ENCODE measurements at regions of chr1 and their contacts with region 1.

Region 1: GRCh38 chr1:182143154-182143657 is 81.7 kb upstream of the ZNF648 start:
- DNase-seq: peak; percentile 91
- ATAC-seq: peak; percentile 58
- H3K4me3 Mint-ChIP-seq: no peak overlapping the region
- H3K27ac Mint-ChIP-seq: no peak overlapping the region
- H3K4me1 Mint-ChIP-seq: peaks cover 8% of the 10 kb centered on the region
- H3K27me3 Mint-ChIP-seq: peaks cover 6% of the 10 kb centered on the region
- CTCF ChIP-seq: peak; percentile 89

Region 2: DNA sequence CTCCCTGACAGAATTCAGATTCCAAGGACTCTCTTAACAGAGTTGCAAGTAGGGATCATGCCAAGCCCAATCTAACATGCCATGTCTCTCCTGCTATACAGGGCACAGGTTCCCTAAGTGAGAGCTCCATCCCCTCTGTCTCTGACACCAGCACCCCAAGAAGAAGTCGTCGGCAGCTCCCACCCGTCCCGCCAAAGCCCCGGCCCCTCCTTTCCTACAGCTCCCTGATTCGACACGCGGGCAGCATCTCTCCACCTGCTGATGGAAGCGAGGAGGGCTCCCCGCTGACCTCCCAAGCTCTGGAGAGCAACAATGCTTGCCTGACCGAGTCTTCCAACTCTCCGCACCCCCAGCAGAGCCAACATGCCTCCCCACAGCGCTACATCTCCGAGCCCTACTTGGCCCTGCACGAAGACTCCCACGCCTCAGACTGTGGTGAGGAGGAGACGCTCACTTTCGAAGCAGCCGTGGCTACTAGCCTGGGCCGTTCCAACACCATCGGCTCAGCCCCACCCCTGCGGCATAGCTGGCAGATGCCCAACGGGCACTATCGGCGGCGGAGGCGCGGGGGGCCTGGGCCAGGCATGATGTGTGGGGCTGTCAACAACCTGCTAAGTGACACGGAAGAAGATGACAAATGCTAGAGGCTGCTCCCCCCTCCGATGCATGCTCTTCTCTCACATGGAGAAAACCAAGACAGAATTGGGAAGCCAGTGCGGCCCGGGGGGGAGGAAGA is 344.8 kb before region 1 on chr1:
- CTCF ChIA-PET with region 1: no interaction called
- POLR2A ChIA-PET with region 1: no interaction called
- intact Hi-C with region 1: no loop called
- DNase-seq: no peak
- ATAC-seq: no peak
- H3K4me3 Mint-ChIP-seq: no peak overlapping the region
- H3K27ac Mint-ChIP-seq: no peak overlapping the region
- H3K4me1 Mint-ChIP-seq: no peaks in the 10 kb centered on the region
- H3K27me3 Mint-ChIP-seq: no peaks in the 10 kb centered on the region
- CTCF ChIP-seq: no peak

Region 3: DNA sequence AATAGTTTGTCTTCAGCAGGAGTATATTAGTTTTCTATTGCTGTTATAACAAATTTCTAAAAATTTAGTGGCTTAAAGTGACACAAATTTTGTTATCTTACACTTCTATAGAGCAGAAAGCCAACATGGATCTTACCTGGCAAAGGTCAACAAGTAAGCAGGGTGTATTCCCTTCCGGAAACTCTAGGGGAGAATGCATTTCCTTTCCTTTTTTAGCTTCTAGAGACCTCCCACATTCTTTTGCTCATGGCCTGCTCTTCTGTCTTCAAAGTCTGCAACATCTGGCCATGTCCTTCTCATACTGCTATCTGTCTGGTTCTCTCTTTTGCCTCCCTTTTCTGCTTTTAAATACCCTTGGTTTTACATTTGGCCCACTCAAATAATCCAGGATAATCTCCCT is 324.3 kb before region 1 on chr1:
- CTCF ChIA-PET with region 1: no interaction called
- POLR2A ChIA-PET with region 1: no interaction called
- intact Hi-C with region 1: no loop called
- DNase-seq: no peak
- ATAC-seq: no peak
- H3K4me3 Mint-ChIP-seq: no peak overlapping the region
- H3K27ac Mint-ChIP-seq: no peak overlapping the region
- H3K4me1 Mint-ChIP-seq: no peaks in the 10 kb centered on the region
- H3K27me3 Mint-ChIP-seq: peaks cover 22% of the 10 kb centered on the region
- CTCF ChIP-seq: no peak

Region 4: GRCh38 chr1:182129398-182129797 is 13.8 kb before region 1 on chr1:
- CTCF ChIA-PET with region 1: interaction called, 35 read pairs
- POLR2A ChIA-PET with region 1: no interaction called
- intact Hi-C with region 1: no loop called
- DNase-seq: no peak
- ATAC-seq: no peak
- H3K4me3 Mint-ChIP-seq: no peak overlapping the region
- H3K27ac Mint-ChIP-seq: no peak overlapping the region
- H3K4me1 Mint-ChIP-seq: no peaks in the 10 kb centered on the region
- H3K27me3 Mint-ChIP-seq: no peaks in the 10 kb centered on the region
- CTCF ChIP-seq: no peak

Region 5: DNA sequence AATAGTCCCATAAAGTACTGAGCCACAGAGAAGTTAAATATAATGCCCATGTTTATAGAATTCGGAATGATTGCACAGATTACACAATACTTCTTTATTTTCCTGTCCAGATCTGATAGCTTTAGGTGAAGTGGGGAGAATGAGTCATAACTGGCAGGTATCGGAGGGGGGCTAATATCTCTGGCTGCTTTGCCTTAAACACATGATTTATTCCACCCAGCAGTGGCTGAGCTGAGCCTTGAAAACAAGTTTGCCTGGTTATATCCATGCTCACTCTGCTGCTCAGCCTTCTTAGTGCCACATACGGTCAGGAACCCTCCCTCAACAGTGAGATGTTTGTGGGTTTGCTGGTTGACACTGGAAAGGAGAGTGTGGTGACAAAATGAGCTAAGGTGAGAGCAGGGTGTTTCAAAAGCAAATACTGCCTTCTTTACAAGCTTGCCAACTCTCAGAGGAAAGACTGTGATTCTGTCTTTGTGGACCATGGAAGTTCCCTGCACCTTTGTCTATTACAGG is 38.0 kb after region 1 on chr1:
- CTCF ChIA-PET with region 1: interaction called, 15 read pairs
- POLR2A ChIA-PET with region 1: no interaction called
- intact Hi-C with region 1: no loop called
- DNase-seq: no peak
- ATAC-seq: no peak
- H3K4me3 Mint-ChIP-seq: no peak overlapping the region
- H3K27ac Mint-ChIP-seq: no peak overlapping the region
- H3K4me1 Mint-ChIP-seq: no peaks in the 10 kb centered on the region
- H3K27me3 Mint-ChIP-seq: peaks cover 8% of the 10 kb centered on the region
- CTCF ChIP-seq: no peak

Region 6: GRCh38 chr1:182215764-182216163 is 72.6 kb after region 1 on chr1:
- CTCF ChIA-PET with region 1: interaction called, 11 read pairs
- POLR2A ChIA-PET with region 1: no interaction called
- intact Hi-C with region 1: no loop called
- DNase-seq: no peak
- ATAC-seq: no peak
- H3K4me3 Mint-ChIP-seq: no peak overlapping the region
- H3K27ac Mint-ChIP-seq: no peak overlapping the region
- H3K4me1 Mint-ChIP-seq: no peaks in the 10 kb centered on the region
- H3K27me3 Mint-ChIP-seq: peaks cover 2% of the 10 kb centered on the region
- CTCF ChIP-seq: no peak

Region 7: GRCh38 chr1:182374101-182374834 is 231.1 kb after region 1 on chr1:
- CTCF ChIA-PET with region 1: interaction called, 17 read pairs
- POLR2A ChIA-PET with region 1: no interaction called
- intact Hi-C with region 1: no loop called
- DNase-seq: no peak
- ATAC-seq: no peak
- H3K4me3 Mint-ChIP-seq: no peak overlapping the region
- H3K27ac Mint-ChIP-seq: no peak overlapping the region
- H3K4me1 Mint-ChIP-seq: no peaks in the 10 kb centered on the region
- H3K27me3 Mint-ChIP-seq: peaks cover 3% of the 10 kb centered on the region
- CTCF ChIP-seq: no peak

Region 8: DNA sequence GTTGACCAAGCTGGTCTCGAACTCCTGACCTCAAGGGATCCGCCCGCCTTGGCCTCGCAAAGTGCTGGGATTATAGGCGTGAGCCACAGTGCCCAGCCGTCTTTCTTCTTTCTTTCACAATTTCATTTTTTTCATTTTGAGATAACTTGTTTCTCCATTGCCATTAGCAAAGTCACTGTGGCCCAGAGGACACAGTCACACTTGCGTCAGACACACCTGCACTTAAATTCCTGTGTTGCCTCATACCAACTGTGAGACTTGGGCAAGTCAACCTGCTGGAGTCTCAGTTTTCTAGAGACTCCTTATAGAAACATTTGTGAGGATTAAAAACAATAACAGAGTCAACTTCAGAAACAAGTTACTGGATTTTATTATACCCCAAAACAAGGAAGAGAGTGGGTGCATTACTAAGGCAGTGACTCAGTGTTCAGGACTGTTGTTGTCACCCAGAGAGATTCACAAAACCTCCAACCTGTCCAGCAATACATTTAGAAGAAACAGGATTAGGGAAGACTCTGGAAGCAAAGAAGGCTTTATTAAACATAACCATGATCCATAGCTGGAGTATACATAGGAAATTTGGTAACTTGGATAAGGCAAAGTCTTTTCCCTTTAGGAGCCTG is 254.7 kb after region 1 on chr1:
- CTCF ChIA-PET with region 1: interaction called, 270 read pairs
- POLR2A ChIA-PET with region 1: interaction called, 5 read pairs
- intact Hi-C with region 1: loop called (anchors 1 kb)
- DNase-seq: no peak
- ATAC-seq: no peak
- H3K4me3 Mint-ChIP-seq: no peak overlapping the region
- H3K27ac Mint-ChIP-seq: no peak overlapping the region
- H3K4me1 Mint-ChIP-seq: peaks cover 4% of the 10 kb centered on the region
- H3K27me3 Mint-ChIP-seq: peaks cover 14% of the 10 kb centered on the region
- CTCF ChIP-seq: no peak

Measured in activated CD8-positive, alpha-beta T cell treated with anti-CD3 and anti-CD28 coated beads for 36 hours (primary cell).